Colonic mucosa (tissue), 4 donors: ENCODE measurements at regions of chr2 and their contacts with region 1.

Region 1: DNA sequence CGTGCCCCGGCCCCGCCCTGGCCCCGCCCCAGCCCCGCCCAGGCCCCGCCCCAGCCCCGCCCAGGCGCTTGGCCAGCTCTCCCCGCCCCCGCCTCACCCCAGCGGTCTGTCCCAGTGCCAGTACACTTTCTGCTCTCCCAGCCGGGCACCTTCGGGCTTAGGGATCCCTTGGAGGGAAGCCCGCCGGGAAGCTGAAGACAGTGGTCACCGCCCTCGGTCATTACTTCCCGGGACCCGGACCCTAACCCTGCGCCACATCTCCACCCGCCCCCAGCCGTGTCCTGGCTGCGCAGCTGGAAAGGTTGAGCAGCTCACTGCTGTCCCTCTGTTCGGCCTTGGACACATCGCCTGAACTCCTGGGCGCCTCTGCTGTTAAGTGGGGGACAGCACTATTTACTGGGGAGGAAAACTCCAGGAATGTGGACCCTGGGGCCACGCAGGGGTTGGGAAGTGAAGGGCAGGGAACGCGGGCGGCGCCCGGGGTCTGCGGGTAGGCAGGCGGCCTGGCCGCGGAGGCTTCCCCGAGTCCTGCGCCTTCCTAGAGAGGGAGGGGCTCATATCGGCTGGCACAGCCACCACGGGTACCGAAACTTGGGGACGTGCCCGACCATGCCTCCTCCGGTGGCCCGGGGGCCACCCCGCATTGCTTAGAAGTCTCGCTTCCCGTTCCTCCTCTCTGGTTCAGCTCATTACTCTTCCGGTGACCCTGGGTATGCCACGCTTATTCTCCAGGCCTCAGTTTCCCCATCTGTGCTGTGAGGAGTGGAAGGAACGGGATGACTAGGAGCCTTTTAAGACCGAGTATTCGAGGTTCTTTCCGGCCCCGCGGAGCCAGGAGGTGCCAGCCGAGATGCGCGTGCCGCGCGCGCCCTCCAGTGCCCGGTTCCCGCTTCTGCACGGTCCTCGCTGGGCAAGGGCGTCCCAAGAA is 121.0 kb downstream of the GYPC start:
- DNase-seq: peak; percentile 79
- H3K4me3 ChIP-seq: peak overlapping the region; percentile 53
- H3K27ac ChIP-seq: no peak overlapping the region
- H3K4me1 ChIP-seq: no peaks in the 10 kb centered on the region
- H3K27me3 ChIP-seq: no peaks in the 10 kb centered on the region
- CTCF ChIP-seq: peak; percentile 94

Region 2: DNA sequence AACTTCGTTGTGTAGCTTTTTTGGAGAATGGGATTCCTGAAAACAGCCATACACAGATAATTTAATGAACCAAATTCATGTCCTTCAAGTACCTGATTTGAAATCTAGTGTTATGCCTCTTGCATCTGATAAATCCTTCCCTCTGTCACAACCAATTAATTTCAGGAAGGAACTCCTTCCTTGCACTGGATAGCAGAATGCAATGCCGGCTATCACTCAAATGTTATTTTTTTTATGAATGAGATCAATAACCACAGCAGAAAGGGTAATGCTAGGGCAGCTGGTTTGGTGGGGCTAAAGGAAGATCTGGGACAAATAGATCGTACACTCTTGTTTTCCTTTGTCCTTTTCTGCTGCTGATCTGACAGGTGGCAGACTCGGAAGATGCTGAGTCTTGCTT is 1020.5 kb before region 1 on chr2:
- intact Hi-C with region 1: loop called (anchors 10 kb)
- DNase-seq: no peak
- H3K4me3 ChIP-seq: no peak overlapping the region
- H3K27ac ChIP-seq: no peak overlapping the region
- H3K4me1 ChIP-seq: no peaks in the 10 kb centered on the region
- H3K27me3 ChIP-seq: no peaks in the 10 kb centered on the region
- CTCF ChIP-seq: no peak

Region 3: GRCh38 chr2:126527836-126528507 is 249.0 kb before region 1 on chr2:
- intact Hi-C with region 1: loop called (anchors 5 kb)
- DNase-seq: peak; percentile 57
- H3K4me3 ChIP-seq: no peak overlapping the region
- H3K27ac ChIP-seq: no peak overlapping the region
- H3K4me1 ChIP-seq: no peaks in the 10 kb centered on the region
- H3K27me3 ChIP-seq: no peaks in the 10 kb centered on the region
- CTCF ChIP-seq: no peak